SK-N-SH (cell line): ENCODE measurements at regions of chr20 and their contacts with region 1.

Region 1: DNA sequence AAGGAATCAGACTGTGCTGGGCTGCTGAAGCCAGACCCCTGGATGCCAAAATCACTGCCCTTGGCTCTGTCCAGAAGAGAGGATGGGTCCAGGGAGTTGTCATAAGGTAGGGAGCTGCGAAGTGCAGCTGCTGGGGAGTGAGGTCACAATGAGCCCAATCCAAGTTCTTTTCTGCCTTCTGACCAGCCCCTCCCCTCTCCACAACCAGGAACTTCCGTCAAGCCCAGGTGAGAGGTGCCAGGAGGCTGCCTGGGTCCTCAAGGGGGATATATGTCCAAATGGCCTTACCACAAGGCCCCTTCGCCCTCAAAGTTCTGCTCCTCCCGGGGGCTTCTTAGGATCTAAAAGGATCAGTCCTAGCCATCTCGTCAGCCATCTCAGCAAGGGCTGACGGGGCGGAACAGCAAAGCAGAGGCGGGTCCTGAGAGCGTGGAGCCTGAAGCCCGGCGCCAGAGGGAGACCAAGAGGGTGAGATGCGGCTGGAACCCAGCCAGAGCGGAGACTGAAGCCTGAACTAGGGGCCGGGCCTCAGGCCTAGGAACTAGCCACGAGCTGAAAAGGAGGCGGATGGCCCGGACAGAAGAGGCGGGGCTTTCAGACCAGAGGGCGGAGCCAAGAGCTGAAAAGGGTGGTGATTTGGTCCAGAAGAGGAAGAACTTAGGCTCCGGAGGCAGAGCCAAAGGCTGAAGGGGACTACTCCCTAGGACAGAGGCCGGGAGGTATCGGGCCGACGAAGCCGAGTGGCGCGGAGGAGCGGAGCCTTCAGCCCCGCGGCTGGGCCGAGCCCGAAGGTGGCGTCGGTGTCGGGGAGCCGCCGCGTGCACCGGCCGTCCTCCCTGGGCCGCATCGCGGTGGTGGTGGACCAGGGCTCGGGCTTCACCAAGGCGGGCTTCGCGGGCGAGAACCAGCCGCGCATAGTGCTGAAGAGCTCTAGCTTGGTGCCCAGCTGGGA is at the start of gene ACTL10:
- DNase-seq: peak; percentile 94
- H3K4me3 ChIP-seq: peak within 1 kb of the TSS; percentile 41 to 52; a peak in 3 of 4 replicates
- H3K27ac ChIP-seq: peak within 1 kb of the TSS; percentile 55 to 87; a peak in 3 of 4 replicates
- H3K4me1 ChIP-seq: peaks cover 0 to 41% of the 10 kb centered on the region in 2 experiments; a peak in 1 of 4 replicates
- H3K27me3 ChIP-seq: no peaks in the 10 kb centered on the region
- CTCF ChIP-seq: peak; percentile 35
- EP300 ChIP-seq: no peak; a peak in 1 of 4 replicates
- RAD21 ChIP-seq: 0 out of 2 replicates have a peak, but pooled peaks have one; percentile 8
- polyA plus RNA-seq, gene ACTL10: 0.19 and 0.25 TPM in 2 replicates

Region 2: GRCh38 chr20:33444797-33445565 is 221.6 kb before region 1 on chr20:
- CTCF ChIA-PET with region 1: interaction called, 14 read pairs
- POLR2A ChIA-PET with region 1: interaction called, 9 read pairs
- DNase-seq: no peak
- H3K4me3 ChIP-seq: peak overlapping the region in 1 of 2 experiments; percentile 60; a peak in 1 of 4 replicates
- H3K27ac ChIP-seq: no peak overlapping the region
- H3K4me1 ChIP-seq: peaks cover 0 to 13% of the 10 kb centered on the region in 2 experiments; a peak in 1 of 4 replicates
- H3K27me3 ChIP-seq: no peaks in the 10 kb centered on the region
- CTCF ChIP-seq: peak; percentile 27; the same call in 1 of the 2 replicates
- EP300 ChIP-seq: no peak
- RAD21 ChIP-seq: peak; percentile 39; the same call in 1 of the 2 replicates

Region 3: DNA sequence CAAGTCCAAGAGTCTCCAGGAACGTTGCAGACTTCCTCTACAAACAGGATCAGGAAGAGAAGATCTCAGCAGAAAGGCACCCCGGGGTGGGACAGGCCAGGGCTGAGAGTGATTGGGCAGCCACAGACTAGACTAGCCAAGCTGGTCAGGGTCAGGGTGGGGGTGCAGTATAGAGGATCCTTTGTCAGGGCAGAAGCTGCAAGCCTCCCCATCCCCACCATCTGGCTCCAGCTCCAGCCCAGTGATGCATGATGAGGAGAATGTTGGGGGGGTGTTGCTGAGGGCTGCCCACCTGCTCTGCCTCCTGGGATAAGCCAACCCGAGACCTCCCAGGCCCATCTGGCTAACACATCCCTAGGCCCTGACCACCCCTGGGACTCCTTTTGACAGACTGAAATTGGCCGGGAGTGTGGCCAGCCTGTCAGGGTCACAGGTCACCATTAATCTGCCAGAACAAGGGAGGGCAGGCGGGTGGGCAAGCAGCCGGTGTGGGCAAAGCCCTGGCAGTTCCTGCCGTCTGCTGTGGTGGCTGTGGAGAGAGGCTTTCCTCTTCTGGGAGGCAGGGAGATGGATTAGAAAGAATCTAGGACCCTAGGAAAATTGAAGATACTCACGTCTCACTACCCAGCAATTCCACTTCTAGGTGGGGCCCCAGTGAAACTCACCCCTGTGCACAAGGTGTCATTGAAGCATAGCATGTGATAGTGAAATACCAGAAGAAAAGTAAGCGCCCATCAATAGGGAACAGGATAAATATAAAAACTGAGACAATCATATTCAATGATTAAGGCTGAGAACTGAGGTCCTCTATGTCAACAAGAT is 200.9 kb before region 1 on chr20:
- CTCF ChIA-PET with region 1: interaction called, 13 read pairs
- POLR2A ChIA-PET with region 1: no interaction called
- DNase-seq: no peak
- H3K4me3 ChIP-seq: no peak overlapping the region
- H3K27ac ChIP-seq: no peak overlapping the region
- H3K4me1 ChIP-seq: peaks cover 0 to 6% of the 10 kb centered on the region in 2 experiments; a peak in 1 of 4 replicates
- H3K27me3 ChIP-seq: no peaks in the 10 kb centered on the region
- CTCF ChIP-seq: no peak
- EP300 ChIP-seq: no peak
- RAD21 ChIP-seq: no peak

Region 4: GRCh38 chr20:33679758-33680485 is 13.4 kb after region 1 on chr20:
- CTCF ChIA-PET with region 1: interaction called, 34 read pairs
- POLR2A ChIA-PET with region 1: interaction called, 4 read pairs
- DNase-seq: no peak
- H3K4me3 ChIP-seq: no peak overlapping the region
- H3K27ac ChIP-seq: no peak overlapping the region
- H3K4me1 ChIP-seq: peaks cover 2 to 12% of the 10 kb centered on the region in 2 experiments; a peak in 2 of 4 replicates
- H3K27me3 ChIP-seq: no peaks in the 10 kb centered on the region
- CTCF ChIP-seq: no peak
- EP300 ChIP-seq: no peak
- RAD21 ChIP-seq: no peak

Region 5: DNA sequence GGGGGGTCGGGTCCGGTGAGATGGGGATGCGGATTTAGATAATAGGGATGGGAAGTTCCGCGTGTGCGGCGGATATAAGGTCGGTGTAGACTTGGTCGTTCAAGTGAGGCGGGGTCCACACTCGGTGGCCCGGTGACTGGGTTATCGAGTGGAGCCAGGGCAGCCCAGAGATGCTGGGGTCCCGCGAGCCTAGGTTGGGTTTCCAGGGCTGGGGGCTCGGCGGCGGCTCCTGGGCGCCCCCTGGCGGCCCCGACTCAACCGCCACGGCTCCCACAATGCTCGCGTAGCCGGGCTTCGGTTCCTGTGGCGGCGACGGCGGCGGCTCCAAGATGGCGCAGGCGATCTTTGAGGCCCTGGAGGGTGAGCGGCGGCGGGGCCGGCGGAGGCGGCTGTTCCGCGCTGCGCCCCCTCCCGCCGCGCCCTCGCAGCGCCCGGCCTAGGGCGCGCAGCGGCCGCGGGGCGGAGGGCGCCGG is 65.2 kb after region 1 on chr20 and contains the start of gene ZNF341:
- CTCF ChIA-PET with region 1: interaction called, 18 read pairs
- POLR2A ChIA-PET with region 1: no interaction called
- DNase-seq: peak; percentile 93
- H3K4me3 ChIP-seq: peak within 1 kb of the TSS; percentile 46 to 66
- H3K27ac ChIP-seq: peak within 1 kb of the TSS; percentile 59 to 87
- H3K4me1 ChIP-seq: peaks cover 10 to 14% of the 10 kb centered on the region in 2 experiments; a peak in 2 of 4 replicates
- H3K27me3 ChIP-seq: no peaks in the 10 kb centered on the region
- CTCF ChIP-seq: peak; percentile 81
- EP300 ChIP-seq: no peak
- RAD21 ChIP-seq: peak; percentile 75
- polyA plus RNA-seq, gene ZNF341: 2.8 and 3.2 TPM in 2 replicates

Region 6: GRCh38 chr20:33753763-33754162 is 87.2 kb after region 1 on chr20:
- CTCF ChIA-PET with region 1: no interaction called
- POLR2A ChIA-PET with region 1: no interaction called
- DNase-seq: no peak
- H3K4me3 ChIP-seq: no peak overlapping the region
- H3K27ac ChIP-seq: no peak overlapping the region
- H3K4me1 ChIP-seq: no peaks in the 10 kb centered on the region
- H3K27me3 ChIP-seq: no peaks in the 10 kb centered on the region
- CTCF ChIP-seq: no peak
- EP300 ChIP-seq: no peak
- RAD21 ChIP-seq: no peak

Region 7: GRCh38 chr20:33875055-33875454 is 208.5 kb after region 1 on chr20:
- CTCF ChIA-PET with region 1: no interaction called
- POLR2A ChIA-PET with region 1: no interaction called
- DNase-seq: no peak
- H3K4me3 ChIP-seq: no peak overlapping the region
- H3K27ac ChIP-seq: no peak overlapping the region
- H3K4me1 ChIP-seq: no peaks in the 10 kb centered on the region; a peak in 1 of 4 replicates
- H3K27me3 ChIP-seq: no peaks in the 10 kb centered on the region; the same call in 1 of the 2 replicates
- CTCF ChIP-seq: no peak
- EP300 ChIP-seq: no peak
- RAD21 ChIP-seq: no peak